ENCODE measurements at regions of chr17 and their contacts with region 1.

Region 1: GRCh38 chr17:81860756-81861518 is 602 bp upstream of the P4HB start:
- DNase-seq: peak; percentile 99
- ATAC-seq: peak; percentile 92
- H3K4me3 Mint-ChIP-seq: peak overlapping the region; percentile 96
- H3K27ac Mint-ChIP-seq: peak overlapping the region; percentile 98
- H3K4me1 Mint-ChIP-seq: peaks cover 44% of the 10 kb centered on the region
- H3K27me3 Mint-ChIP-seq: no peaks in the 10 kb centered on the region
- CTCF ChIP-seq: no peak

Region 2: DNA sequence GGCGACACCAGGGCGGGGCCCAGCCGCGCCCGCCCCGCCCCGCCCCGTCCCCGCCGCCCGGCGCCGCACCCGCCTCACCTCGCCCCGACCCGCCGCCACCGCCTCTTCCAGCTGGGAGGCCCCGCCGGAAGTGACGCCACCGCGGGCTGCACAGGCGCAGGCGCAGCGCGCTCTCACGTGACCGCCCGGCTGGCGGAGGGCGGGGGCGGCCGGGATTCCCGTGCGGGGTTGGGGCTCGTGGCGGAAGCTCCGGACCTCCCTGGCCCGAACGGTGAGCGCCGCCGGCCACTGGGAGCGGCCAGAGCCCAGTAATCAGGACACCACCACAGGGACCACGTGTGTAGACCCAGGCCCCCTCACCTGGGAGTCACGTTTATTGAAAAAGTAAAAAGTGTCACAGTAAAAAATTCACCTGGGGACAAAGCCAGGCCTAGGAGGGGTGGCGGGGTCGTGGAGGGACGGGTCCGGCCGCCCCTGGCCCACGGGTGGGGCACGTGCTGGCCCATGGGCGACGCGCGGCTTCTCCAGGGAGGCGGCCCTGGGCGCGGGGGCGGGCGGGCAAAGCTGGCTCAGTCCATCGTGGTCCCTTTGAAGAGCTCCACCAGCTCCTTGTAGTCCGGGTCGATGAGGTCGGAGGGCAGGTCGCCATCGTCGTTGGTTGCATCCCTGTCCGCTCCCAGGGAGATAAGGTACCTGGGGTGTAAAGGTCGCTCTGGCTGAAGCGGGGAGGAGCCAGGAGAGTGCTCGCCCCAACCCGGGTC is 27.6 kb before region 1 on chr17 and contains the start of gene MCRIP1:
- CTCF ChIA-PET with region 1: no interaction called
- POLR2A ChIA-PET with region 1: interaction called, 10 read pairs
- intact Hi-C with region 1: no loop called
- DNase-seq: peak; percentile 96
- ATAC-seq: peak; percentile 82
- H3K4me3 Mint-ChIP-seq: peak within 1 kb of the TSS; percentile 95
- H3K27ac Mint-ChIP-seq: peak within 1 kb of the TSS; percentile 95
- H3K4me1 Mint-ChIP-seq: peaks cover 25% of the 10 kb centered on the region
- H3K27me3 Mint-ChIP-seq: no peaks in the 10 kb centered on the region
- CTCF ChIP-seq: no peak
- total RNA-seq, gene MCRIP1: 55.1 to 56.5 TPM

Region 3: GRCh38 chr17:81840826-81841778 is 19.8 kb before region 1 on chr17:
- CTCF ChIA-PET with region 1: no interaction called
- POLR2A ChIA-PET with region 1: interaction called, 35 read pairs
- intact Hi-C with region 1: no loop called
- DNase-seq: no peak
- ATAC-seq: no peak
- H3K4me3 Mint-ChIP-seq: no peak overlapping the region
- H3K27ac Mint-ChIP-seq: no peak overlapping the region
- H3K4me1 Mint-ChIP-seq: no peaks in the 10 kb centered on the region
- H3K27me3 Mint-ChIP-seq: no peaks in the 10 kb centered on the region
- CTCF ChIP-seq: no peak

Region 4: GRCh38 chr17:81890447-81891299 is 29.7 kb after region 1 on chr17:
- CTCF ChIA-PET with region 1: no interaction called
- POLR2A ChIA-PET with region 1: interaction called, 14 read pairs
- intact Hi-C with region 1: no loop called
- DNase-seq: peak; percentile 41
- ATAC-seq: no peak
- H3K4me3 Mint-ChIP-seq: peak overlapping the region; percentile 85
- H3K27ac Mint-ChIP-seq: peak overlapping the region; percentile 94
- H3K4me1 Mint-ChIP-seq: peaks cover 15% of the 10 kb centered on the region
- H3K27me3 Mint-ChIP-seq: no peaks in the 10 kb centered on the region
- CTCF ChIP-seq: no peak